ENCODE measurements at regions of chr5 and their contacts with region 1.

Region 1: GRCh38 chr5:29218134-29218533 is 1975.4 kb upstream of the CDH6 start:
- DNase-seq: no peak
- H3K4me3 ChIP-seq: no peak overlapping the region
- H3K27ac ChIP-seq: no peak overlapping the region
- H3K4me1 ChIP-seq: no peaks in the 10 kb centered on the region
- H3K27me3 ChIP-seq: no peaks in the 10 kb centered on the region
- CTCF ChIP-seq: peak; percentile 42; the same call in 1 of the 2 replicates

Region 2: GRCh38 chr5:28903643-28904042 is 314.5 kb before region 1 on chr5:
- CTCF ChIA-PET with region 1: no interaction called
- POLR2A ChIA-PET with region 1: no interaction called
- intact Hi-C with region 1: loop called (anchors 5 kb)
- DNase-seq: no peak
- H3K4me3 ChIP-seq: no peak overlapping the region
- H3K27ac ChIP-seq: no peak overlapping the region
- H3K4me1 ChIP-seq: no peaks in the 10 kb centered on the region
- H3K27me3 ChIP-seq: no peaks in the 10 kb centered on the region
- CTCF ChIP-seq: 0 out of 2 replicates have a peak, but pooled peaks have one; percentile 26

Region 3: GRCh38 chr5:29005386-29005785 is 212.7 kb before region 1 on chr5:
- CTCF ChIA-PET with region 1: no interaction called
- POLR2A ChIA-PET with region 1: no interaction called
- intact Hi-C with region 1: loop called (anchors 5 kb)
- DNase-seq: no peak
- H3K4me3 ChIP-seq: no peak overlapping the region
- H3K27ac ChIP-seq: no peak overlapping the region
- H3K4me1 ChIP-seq: no peaks in the 10 kb centered on the region
- H3K27me3 ChIP-seq: no peaks in the 10 kb centered on the region
- CTCF ChIP-seq: peak; percentile 53

Measured in PC-9 (cell line).